Endothelial cell of umbilical vein (primary cell): ENCODE measurements at regions of chr19 and their contacts with region 1.

Region 1: GRCh38 chr19:51367565-51368365 is 1.0 kb downstream of the CLDND2 start:
- DNase-seq: peak; percentile 99
- H3K4me3 ChIP-seq: peak overlapping the region; percentile 6 to 63 (median 53)
- H3K27ac ChIP-seq: peak overlapping the region; percentile 19
- H3K4me1 ChIP-seq: peaks cover 15% of the 10 kb centered on the region
- H3K27me3 ChIP-seq: no peaks in the 10 kb centered on the region
- CTCF ChIP-seq: no peak
- POLR2A ChIP-seq: peak; percentile 50

Region 2: DNA sequence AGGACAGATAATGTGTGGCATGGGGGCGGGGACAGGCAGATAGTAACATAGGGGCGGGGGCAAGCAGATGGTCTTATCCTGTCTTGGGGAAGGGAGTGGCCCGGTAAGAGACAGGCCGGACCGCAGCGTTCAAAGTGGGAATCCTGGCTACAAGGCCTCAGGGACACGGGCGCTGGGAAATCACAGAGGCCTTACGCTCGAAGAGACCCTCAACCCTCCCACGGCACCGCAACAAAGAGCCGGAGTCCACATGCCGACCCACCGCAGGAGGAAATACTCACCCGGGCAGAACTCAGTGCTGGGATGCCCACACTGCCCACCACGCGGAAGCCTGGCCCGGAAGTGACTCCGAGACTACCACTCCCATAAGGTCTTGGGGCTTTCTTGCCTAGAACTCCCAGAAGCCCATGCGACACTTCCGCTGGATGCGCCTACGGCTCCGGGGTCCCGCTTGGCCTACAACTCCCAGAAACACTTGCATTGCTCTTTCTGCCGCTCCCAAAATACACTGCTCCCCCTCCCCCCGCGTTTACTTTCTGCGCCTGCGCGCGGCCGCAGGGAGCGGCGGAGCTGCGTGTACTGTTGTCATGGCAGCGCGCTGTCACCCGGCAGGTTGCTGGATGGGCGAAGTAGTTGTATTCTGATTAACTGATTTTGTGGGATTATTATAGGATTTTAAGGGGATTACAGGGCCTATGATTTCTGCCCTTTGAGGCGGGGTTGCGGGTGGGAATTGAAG is 259.5 kb before region 1 on chr19 and contains the start of gene CTU1:
- CTCF ChIA-PET with region 1: no interaction called
- POLR2A ChIA-PET with region 1: no interaction called
- dilution Hi-C with region 1: no loop called
- intact Hi-C with region 1: loop called (anchors 2 kb)
- DNase-seq: peak; percentile 99
- H3K4me3 ChIP-seq: peak within 1 kb of the TSS; percentile 56 to 65 (median 64)
- H3K27ac ChIP-seq: peak within 1 kb of the TSS; percentile 51
- H3K4me1 ChIP-seq: peaks cover 11% of the 10 kb centered on the region
- H3K27me3 ChIP-seq: peaks cover 0 to 9% of the 10 kb centered on the region in 2 experiments
- CTCF ChIP-seq: no peak
- POLR2A ChIP-seq: peak; percentile 89
- total RNA-seq, gene CTU1: 8.2 and 8.7 TPM in 2 replicates

Region 3: GRCh38 chr19:51296336-51297093 is 71.2 kb before region 1 on chr19:
- CTCF ChIA-PET with region 1: no interaction called
- POLR2A ChIA-PET with region 1: no interaction called
- dilution Hi-C with region 1: no loop called
- intact Hi-C with region 1: no loop called
- DNase-seq: no peak
- H3K4me3 ChIP-seq: no peak overlapping the region
- H3K27ac ChIP-seq: no peak overlapping the region
- H3K4me1 ChIP-seq: no peaks in the 10 kb centered on the region
- H3K27me3 ChIP-seq: no peaks in the 10 kb centered on the region
- CTCF ChIP-seq: no peak
- POLR2A ChIP-seq: no peak

Region 4: DNA sequence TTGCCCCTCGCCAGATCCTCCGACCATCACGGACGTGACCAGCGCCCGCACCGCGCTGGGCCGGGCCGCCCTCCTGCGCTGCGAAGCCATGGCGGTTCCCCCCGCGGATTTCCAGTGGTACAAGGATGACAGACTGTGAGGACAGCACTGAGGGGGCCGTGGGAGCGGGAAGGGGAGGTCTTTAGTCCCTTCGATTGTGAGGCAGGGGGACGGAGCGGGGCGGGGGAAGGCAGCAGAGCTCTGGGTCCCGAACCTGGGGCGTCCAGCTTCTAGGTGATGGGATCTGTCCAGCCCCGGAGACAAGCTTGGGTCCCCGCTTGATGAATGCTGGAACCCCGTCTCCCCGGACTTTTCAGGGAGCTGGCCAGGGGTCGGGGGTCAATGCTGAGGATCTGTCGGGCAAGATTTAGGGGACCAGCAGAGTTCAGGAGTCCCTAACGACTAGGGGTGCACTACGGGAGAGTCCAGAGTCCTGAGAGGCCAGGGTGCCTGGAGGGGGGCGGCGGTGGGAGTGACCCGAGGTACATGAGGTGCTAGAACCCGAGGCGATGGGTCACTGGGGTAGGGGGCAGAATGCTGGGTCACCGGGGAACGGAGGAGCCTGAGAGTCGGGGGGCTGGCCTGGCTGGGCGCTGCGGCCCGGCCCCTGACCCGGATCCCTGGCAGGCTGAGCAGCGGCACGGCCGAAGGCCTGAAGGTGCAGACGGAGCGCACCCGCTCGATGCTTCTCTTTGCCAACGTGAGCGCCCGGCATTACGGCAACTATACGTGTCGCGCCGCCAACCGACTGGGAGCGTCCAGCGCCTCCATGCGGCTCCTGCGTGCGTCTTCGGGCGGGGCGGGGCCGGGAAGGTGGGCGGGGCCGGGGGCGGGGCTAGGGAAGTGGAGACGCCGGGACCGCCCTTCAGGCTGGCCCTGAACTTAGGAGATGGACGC is 40.4 kb before region 1 on chr19:
- CTCF ChIA-PET with region 1: no interaction called
- POLR2A ChIA-PET with region 1: no interaction called
- dilution Hi-C with region 1: no loop called
- intact Hi-C with region 1: loop called (anchors 5 kb)
- DNase-seq: peak; percentile 30
- H3K4me3 ChIP-seq: peak overlapping the region in 1 of 3 experiments; percentile 15
- H3K27ac ChIP-seq: no peak overlapping the region
- H3K4me1 ChIP-seq: no peaks in the 10 kb centered on the region
- H3K27me3 ChIP-seq: peaks cover 6 to 7% of the 10 kb centered on the region in 2 experiments
- CTCF ChIP-seq: peak in 1 of 2 donors; percentile 20
- POLR2A ChIP-seq: no peak

Region 5: DNA sequence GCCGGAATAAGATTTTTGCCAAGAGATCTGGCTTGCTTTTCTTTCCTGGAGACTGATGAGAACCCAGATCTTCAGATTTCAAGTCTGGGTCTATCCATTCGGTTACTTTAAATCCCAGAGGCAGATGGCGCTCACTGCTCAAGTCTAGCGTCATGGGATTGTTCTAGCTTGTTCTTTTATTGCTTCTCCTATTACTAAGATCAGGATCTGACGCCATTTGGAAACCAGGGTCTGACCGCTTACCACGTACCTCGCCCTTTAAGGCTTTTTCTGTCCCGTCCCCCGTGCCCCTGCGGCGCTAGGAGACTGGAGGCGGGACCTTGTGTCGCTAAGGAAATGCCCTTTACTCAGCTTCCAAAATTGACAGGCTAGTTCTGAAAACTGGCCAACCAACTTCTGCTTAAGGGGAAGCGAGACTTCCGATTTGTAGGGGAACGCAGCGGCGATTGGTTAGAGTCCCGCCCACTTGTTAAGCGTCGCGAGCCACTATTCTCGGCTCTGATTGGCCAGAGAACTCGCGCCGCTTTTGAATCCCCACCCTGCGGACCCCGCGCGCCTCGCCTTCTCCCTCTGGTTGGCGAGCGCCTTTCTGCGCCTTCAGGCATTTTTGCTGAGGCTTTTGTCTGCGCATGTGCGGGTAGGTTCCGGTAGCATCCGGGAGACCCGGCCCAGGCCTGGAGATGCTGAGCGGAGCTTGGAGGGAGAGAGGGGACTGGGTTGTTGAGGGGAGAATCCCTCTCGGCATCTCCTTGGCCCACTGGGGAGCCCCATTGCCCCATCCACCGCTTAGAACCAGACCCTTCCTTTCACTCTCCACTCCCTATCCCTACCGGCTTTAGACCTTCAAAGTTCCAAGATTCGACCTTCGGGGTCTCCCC is 26.4 kb after region 1 on chr19:
- CTCF ChIA-PET with region 1: interaction called, 4 read pairs
- POLR2A ChIA-PET with region 1: no interaction called
- dilution Hi-C with region 1: no loop called
- intact Hi-C with region 1: loop called (anchors 1 kb)
- DNase-seq: peak; percentile 91
- H3K4me3 ChIP-seq: peak overlapping the region in 2 of 3 experiments; percentile 25 to 40
- H3K27ac ChIP-seq: peak overlapping the region; percentile 28
- H3K4me1 ChIP-seq: peaks cover 8% of the 10 kb centered on the region
- H3K27me3 ChIP-seq: no peaks in the 10 kb centered on the region
- CTCF ChIP-seq: no peak
- POLR2A ChIP-seq: peak; percentile 27

Region 6: GRCh38 chr19:51570962-51571575 is 203.3 kb after region 1 on chr19 and contains the start of gene ZNF175:
- CTCF ChIA-PET with region 1: no interaction called
- POLR2A ChIA-PET with region 1: no interaction called
- dilution Hi-C with region 1: no loop called
- intact Hi-C with region 1: loop called (anchors 1 kb)
- DNase-seq: peak; percentile 100
- H3K4me3 ChIP-seq: peak within 1 kb of the TSS; percentile 49 to 85 (median 53)
- H3K27ac ChIP-seq: peak within 1 kb of the TSS; percentile 95
- H3K4me1 ChIP-seq: peaks cover 33% of the 10 kb centered on the region
- H3K27me3 ChIP-seq: peaks cover 6 to 25% of the 10 kb centered on the region in 2 experiments
- CTCF ChIP-seq: no peak
- POLR2A ChIP-seq: peak; percentile 58
- total RNA-seq, gene ZNF175: 16.5 and 21.4 TPM in 2 replicates

Region 7: DNA sequence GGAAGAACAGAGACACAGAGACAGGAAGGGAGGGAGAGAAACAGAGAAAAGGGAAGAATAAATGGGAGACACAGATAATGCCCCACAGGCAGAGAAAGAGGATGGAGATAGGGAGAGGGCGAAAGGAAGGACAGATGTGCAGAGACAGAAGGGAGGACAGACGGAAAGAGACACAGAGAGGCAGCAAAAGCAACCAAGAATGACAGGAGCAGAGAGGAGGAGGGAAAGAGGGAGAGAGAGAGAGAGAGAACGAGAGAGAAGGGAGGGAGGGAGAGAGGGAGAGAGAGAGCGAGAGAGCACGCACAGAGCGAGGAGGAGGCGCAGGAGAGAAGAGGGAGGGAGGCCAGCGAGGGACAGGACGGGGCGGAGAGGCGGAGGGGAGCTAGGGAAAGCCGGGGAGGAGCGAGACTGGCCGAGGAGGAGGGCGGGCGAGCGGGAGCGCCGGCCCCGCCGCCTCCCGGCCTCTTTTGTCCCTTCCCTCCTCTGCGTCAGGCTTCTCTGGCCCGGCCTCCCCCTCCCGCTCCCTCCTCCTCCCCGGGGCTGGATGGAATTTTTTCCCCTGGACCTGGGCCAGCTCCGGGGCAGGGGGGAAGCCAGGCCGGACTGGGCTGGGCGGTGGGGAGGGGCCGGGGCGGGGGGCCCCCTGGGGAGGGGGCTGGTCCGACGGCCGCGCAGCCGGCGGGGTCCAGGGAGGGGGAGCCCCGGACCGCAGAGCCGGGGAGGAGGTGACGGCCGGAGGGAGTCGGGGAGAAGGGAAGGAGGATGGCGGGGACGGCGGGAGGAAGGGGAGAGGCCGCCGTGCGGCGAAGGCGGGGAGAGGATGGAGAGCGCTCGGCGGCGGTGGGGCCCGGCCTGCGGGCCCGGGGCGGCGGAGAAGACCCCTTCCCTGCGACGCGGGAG is 321.2 kb after region 1 on chr19:
- CTCF ChIA-PET with region 1: no interaction called
- POLR2A ChIA-PET with region 1: no interaction called
- dilution Hi-C with region 1: no loop called
- intact Hi-C with region 1: loop called (anchors 1 kb)
- DNase-seq: peak; percentile 92
- H3K4me3 ChIP-seq: peak overlapping the region; percentile 73 to 94 (median 91)
- H3K27ac ChIP-seq: peak overlapping the region; percentile 59
- H3K4me1 ChIP-seq: peaks cover 24% of the 10 kb centered on the region
- H3K27me3 ChIP-seq: no peaks in the 10 kb centered on the region
- CTCF ChIP-seq: peak in 1 of 2 donors; percentile 3
- POLR2A ChIP-seq: no peak